Left colon (tissue), 2 donors: ENCODE measurements at regions of chr2 and their contacts with region 1.

Region 1: GRCh38 chr2:10832203-10832936 is 19.8 kb upstream of the PDIA6 start:
- DNase-seq: peak; percentile 63 to 85
- ATAC-seq: peak; percentile 58

Region 2: DNA sequence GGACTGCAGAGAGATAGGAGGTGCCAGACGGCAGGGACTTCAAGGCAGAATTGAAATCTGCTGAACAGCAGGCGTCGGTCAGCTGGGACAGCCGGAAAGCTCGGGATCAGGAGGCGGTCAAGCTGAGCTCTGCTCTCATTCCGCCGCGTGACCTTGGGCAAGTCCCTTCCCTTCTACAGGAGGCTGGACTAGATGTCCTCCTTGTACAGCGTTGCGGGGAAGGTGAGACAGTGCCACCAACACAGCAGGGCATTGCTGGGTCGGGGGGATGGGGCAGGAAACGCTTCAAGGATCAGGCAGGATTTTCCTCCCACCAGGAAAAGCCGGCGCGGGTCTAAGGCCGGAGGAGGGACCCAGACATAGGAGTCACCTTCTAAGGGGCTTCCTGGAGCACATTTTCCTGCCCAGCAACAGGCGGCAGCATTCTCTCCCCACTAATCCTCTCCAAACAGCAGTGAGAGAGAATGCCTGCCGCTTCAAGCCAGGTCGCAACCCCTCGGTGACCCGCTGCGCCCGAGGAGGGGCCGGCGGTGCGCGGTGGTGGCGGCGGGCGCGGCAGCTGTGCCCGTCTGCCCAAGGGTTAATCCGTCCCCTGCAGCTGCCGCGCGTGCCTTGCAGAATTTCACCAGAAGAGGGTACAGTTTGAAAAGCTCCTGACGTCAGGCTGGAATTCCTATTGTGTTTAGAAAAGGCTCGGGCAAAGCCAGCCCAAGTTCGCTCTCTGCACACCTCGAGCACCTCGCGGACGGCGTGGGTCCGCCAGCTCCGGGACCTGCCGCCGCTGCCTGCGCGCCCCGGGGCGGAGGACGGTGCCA is 79.1 kb after region 1 on chr2 and contains the start of gene KCNF1:
- intact Hi-C with region 1: loop called in 1 of 2 experiments (anchors 10 kb)
- DNase-seq: peak in 1 of 2 donors; percentile 31
- ATAC-seq: peak; percentile 62
- total RNA-seq, gene KCNF1: 0.43 to 1.1 TPM

Region 3: GRCh38 chr2:11124503-11125068 is 292.2 kb after region 1 on chr2:
- intact Hi-C with region 1: loop called (anchors 2 to 5 kb)
- DNase-seq: peak; percentile 58 to 84
- ATAC-seq: peak; percentile 90